ENCODE measurements at regions of chr7 and their contacts with region 1.

Region 1: DNA sequence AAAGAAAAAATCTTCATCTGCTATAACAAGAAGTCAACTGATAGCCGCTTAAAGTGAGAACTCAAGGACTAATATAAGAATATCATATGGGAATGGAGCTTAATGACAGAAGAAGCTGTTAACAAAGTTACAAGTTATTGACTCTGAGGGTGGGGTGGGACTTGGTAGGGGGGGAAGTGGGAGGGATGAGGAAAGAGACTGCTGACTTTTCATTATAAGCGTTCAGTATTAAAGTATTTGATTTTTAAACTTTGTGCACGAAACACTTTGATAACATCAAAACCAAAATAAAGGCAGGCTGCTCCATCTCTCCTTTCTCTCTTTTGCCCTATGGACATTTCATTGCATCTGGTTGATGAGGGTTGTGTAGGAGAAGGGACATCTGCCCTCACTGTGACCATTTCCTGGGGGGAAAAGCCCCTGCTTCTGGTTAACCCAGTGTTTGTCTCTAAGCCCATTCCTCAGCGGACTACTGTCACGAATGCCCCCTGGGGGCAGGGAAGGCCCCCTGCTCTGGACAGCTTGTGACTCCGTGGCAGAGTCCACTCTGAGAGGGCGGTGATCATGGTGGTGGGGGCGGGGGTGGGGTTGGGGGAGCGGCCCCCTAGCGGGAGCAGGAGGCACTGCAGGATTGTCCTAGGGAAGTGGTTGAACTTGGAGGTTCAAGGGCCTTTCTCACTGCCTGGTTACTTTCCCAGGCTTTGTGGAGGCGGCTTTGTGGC is 17.4 kb downstream of the SLC13A4 start:
- DNase-seq: no peak
- H3K4me3 ChIP-seq: no peak overlapping the region
- H3K27ac ChIP-seq: no peak overlapping the region
- H3K4me1 ChIP-seq: peaks cover 51% of the 10 kb centered on the region
- H3K27me3 ChIP-seq: no peaks in the 10 kb centered on the region
- CTCF ChIP-seq: peak; percentile 74

Region 2: GRCh38 chr7:135678612-135679575 is 31.7 kb before region 1 on chr7:
- CTCF ChIA-PET with region 1: no interaction called
- POLR2A ChIA-PET with region 1: no interaction called
- intact Hi-C with region 1: loop called (anchors 2 kb)
- DNase-seq: peak; percentile 65 to 88
- H3K4me3 ChIP-seq: no peak overlapping the region
- H3K27ac ChIP-seq: peak overlapping the region; percentile 51
- H3K4me1 ChIP-seq: peaks cover 25% of the 10 kb centered on the region
- H3K27me3 ChIP-seq: no peaks in the 10 kb centered on the region
- CTCF ChIP-seq: no peak

Region 3: GRCh38 chr7:136000288-136000913 is 289.8 kb after region 1 on chr7:
- CTCF ChIA-PET with region 1: no interaction called
- POLR2A ChIA-PET with region 1: interaction called, 10 read pairs
- intact Hi-C with region 1: no loop called
- DNase-seq: no peak
- H3K4me3 ChIP-seq: no peak overlapping the region
- H3K27ac ChIP-seq: no peak overlapping the region
- H3K4me1 ChIP-seq: peaks cover 16% of the 10 kb centered on the region; the same call in 1 of the 2 replicates
- H3K27me3 ChIP-seq: no peaks in the 10 kb centered on the region
- CTCF ChIP-seq: no peak